ENCODE measurements at regions of chr1 and their contacts with region 1.

Region 1: GRCh38 chr1:67760030-67760821 is 73.0 kb downstream of the GNG12 start:
- DNase-seq: peak; percentile 56
- H3K4me3 ChIP-seq: peak overlapping the region in 1 of 2 experiments; percentile 4; a peak in 1 of 4 replicates
- H3K27ac ChIP-seq: peak overlapping the region; percentile 51 to 74; a peak in 3 of 4 replicates
- H3K4me1 ChIP-seq: peaks cover 5 to 10% of the 10 kb centered on the region in 2 experiments; a peak in 3 of 4 replicates
- H3K27me3 ChIP-seq: no peaks in the 10 kb centered on the region
- CTCF ChIP-seq: peak; percentile 94
- EP300 ChIP-seq: no peak
- RAD21 ChIP-seq: peak; percentile 87

Region 2: DNA sequence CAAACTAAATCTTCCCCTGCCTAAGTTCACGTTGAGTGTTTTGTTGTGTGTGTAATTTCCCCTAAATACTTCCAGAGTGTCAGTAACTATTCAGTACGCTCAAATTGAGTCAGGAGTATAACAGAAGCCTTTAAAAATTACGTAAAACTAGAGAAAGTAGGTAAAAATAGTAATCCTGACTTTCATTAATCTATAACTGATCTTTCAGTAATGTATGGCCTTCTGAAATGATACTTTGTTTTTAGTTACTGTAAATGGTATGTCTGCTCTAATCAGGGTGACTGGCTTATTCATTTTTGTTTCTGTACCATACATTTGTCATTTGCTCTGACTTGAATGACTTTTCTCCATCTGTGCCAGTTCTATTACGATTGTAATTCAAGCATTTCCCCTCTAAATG is 806.0 kb before region 1 on chr1:
- CTCF ChIA-PET with region 1: no interaction called
- POLR2A ChIA-PET with region 1: no interaction called
- DNase-seq: no peak
- H3K4me3 ChIP-seq: no peak overlapping the region
- H3K27ac ChIP-seq: no peak overlapping the region
- H3K4me1 ChIP-seq: no peaks in the 10 kb centered on the region
- H3K27me3 ChIP-seq: no peaks in the 10 kb centered on the region
- CTCF ChIP-seq: no peak
- EP300 ChIP-seq: no peak
- RAD21 ChIP-seq: no peak

Region 3: GRCh38 chr1:67515324-67516080 is 244.7 kb before region 1 on chr1:
- CTCF ChIA-PET with region 1: interaction called, 12 read pairs
- POLR2A ChIA-PET with region 1: no interaction called
- DNase-seq: no peak
- H3K4me3 ChIP-seq: no peak overlapping the region
- H3K27ac ChIP-seq: no peak overlapping the region
- H3K4me1 ChIP-seq: no peaks in the 10 kb centered on the region
- H3K27me3 ChIP-seq: no peaks in the 10 kb centered on the region
- CTCF ChIP-seq: no peak
- EP300 ChIP-seq: no peak
- RAD21 ChIP-seq: no peak

Region 4: GRCh38 chr1:67552336-67552759 is 207.9 kb before region 1 on chr1:
- CTCF ChIA-PET with region 1: interaction called, 216 read pairs
- POLR2A ChIA-PET with region 1: no interaction called
- DNase-seq: no peak
- H3K4me3 ChIP-seq: no peak overlapping the region
- H3K27ac ChIP-seq: no peak overlapping the region
- H3K4me1 ChIP-seq: no peaks in the 10 kb centered on the region
- H3K27me3 ChIP-seq: no peaks in the 10 kb centered on the region
- CTCF ChIP-seq: no peak
- EP300 ChIP-seq: no peak
- RAD21 ChIP-seq: no peak

Region 5: DNA sequence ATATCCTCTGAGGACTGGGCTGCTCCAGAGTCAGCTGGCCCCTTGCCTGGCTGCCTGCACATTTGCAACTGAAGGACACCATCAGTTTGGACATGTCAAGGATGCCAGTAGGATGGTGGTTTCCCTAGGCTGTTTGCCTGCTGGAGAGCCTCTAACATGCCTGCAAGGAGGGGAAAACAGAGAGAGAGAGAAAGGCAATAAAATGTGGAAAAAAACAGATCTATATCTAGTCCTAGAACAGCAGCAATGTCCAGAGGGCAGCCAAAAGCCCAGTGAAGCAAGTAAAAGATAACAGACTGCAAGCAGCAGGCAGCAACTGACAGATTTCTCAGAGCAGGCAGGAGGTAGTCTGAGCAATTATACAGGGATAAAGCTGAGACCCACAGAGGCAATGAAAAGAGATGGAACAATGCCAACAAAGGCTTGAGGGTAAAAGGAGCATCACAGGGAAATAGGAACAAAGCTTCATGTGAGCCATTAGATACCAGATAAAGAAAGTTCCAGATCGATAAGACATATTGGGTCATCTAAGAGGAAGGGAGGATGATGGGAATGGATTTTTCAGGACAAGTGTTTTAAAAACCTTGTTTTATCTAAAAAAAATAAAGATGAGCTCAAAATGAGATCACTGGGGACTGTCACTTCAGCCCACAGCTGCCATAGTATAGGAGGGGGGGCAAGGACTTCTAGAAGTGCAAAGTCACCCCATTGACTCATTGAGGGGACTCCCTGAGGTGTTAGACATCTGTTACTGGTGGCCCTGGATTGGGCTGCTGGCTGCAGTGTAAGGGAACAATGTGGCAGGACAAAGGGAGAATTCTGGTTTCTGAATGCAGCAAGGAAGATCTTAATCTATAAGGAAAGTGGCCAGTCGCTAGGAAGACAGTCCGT is 113.8 kb before region 1 on chr1:
- CTCF ChIA-PET with region 1: interaction called, 26 read pairs
- POLR2A ChIA-PET with region 1: no interaction called
- DNase-seq: peak; percentile 61
- H3K4me3 ChIP-seq: 0 out of 4 replicates have a peak overlapping the region, but pooled peaks of 1 of the 2 experiments have one; percentile 5
- H3K27ac ChIP-seq: peak overlapping the region; percentile 56 to 97
- H3K4me1 ChIP-seq: peaks cover 18 to 39% of the 10 kb centered on the region in 2 experiments
- H3K27me3 ChIP-seq: no peaks in the 10 kb centered on the region
- CTCF ChIP-seq: no peak
- EP300 ChIP-seq: peak; percentile 16 to 95; a peak in 3 of 4 replicates
- RAD21 ChIP-seq: peak; percentile 36; the same call in 1 of the 2 replicates

Region 6: DNA sequence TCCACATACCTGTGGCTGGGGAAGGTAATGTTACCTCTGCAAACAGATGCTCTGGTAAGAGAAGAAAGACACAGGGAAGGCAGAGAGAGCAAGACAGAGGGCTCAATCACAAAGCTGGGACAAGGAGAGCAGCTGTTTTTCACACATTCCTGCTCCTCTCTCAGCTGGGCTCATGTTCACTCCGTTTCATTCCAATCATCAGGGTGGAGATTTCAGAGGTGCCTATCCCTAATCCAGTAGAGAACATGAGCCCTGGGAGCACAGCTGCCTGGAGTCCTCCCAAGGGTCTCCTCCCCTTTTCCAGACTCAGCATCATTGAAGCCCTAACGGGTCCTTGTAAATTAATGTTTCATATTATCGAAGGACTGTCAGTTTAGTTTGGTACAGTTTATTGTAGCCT is 55.9 kb before region 1 on chr1:
- CTCF ChIA-PET with region 1: interaction called, 10 read pairs
- POLR2A ChIA-PET with region 1: no interaction called
- DNase-seq: no peak
- H3K4me3 ChIP-seq: no peak overlapping the region
- H3K27ac ChIP-seq: no peak overlapping the region
- H3K4me1 ChIP-seq: peaks cover 8 to 10% of the 10 kb centered on the region in 2 experiments; a peak in 2 of 4 replicates
- H3K27me3 ChIP-seq: no peaks in the 10 kb centered on the region
- CTCF ChIP-seq: no peak
- EP300 ChIP-seq: no peak
- RAD21 ChIP-seq: no peak

Region 7: GRCh38 chr1:67741121-67741520 is 19.1 kb before region 1 on chr1:
- CTCF ChIA-PET with region 1: interaction called, 18 read pairs
- POLR2A ChIA-PET with region 1: interaction called, 4 read pairs
- DNase-seq: no peak
- H3K4me3 ChIP-seq: no peak overlapping the region
- H3K27ac ChIP-seq: no peak overlapping the region
- H3K4me1 ChIP-seq: peaks cover 7 to 23% of the 10 kb centered on the region in 2 experiments; a peak in 3 of 4 replicates
- H3K27me3 ChIP-seq: no peaks in the 10 kb centered on the region
- CTCF ChIP-seq: no peak
- EP300 ChIP-seq: no peak
- RAD21 ChIP-seq: no peak

Region 8: GRCh38 chr1:67853704-67854103 is 93.5 kb after region 1 on chr1:
- CTCF ChIA-PET with region 1: interaction called, 60 read pairs
- POLR2A ChIA-PET with region 1: no interaction called
- DNase-seq: peak; percentile 77
- H3K4me3 ChIP-seq: peak overlapping the region in 1 of 2 experiments; percentile 2; a peak in 1 of 4 replicates
- H3K27ac ChIP-seq: peak overlapping the region in 1 of 2 experiments; percentile 43; a peak in 2 of 4 replicates
- H3K4me1 ChIP-seq: peaks cover 4 to 10% of the 10 kb centered on the region in 2 experiments
- H3K27me3 ChIP-seq: no peaks in the 10 kb centered on the region
- CTCF ChIP-seq: peak; percentile 97
- EP300 ChIP-seq: no peak
- RAD21 ChIP-seq: peak; percentile 99

Measured in SK-N-SH (cell line).